ENCODE measurements at regions of chr19 and their contacts with region 1.

Region 1: DNA sequence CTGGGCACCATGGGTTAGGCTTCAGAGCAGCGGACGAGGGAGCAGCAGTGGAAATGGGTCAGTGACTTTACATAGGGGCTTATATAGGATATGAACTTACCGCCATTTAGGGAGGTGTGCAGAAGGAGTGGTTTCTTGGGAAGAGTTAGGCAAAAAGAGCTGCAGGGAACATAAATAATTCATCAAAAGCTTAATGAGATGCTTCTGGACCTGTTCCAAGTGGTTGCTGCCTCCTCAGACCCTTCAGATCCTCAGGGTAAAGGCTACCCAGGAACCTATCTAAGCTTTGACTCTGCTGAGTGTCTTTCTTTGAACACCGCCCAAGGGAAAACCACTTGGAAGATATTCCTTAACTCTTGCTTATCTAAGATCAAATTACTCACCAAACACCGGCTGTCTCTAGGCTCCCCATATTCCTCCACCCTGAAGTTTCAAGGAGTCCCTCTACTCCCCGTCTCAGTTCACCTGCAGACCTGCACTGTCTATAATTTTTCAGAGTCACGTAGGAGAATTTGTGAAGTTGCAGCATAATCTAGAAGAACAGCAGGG is at the start of gene IGFL4:
- DNase-seq: peak in 1 of 2 experiments; percentile 41
- ATAC-seq: peak; percentile 45 to 53; a peak in 4 of 6 replicates
- H3K4me3 ChIP-seq: no peak within 1 kb of the TSS
- H3K27ac ChIP-seq: peak within 1 kb of the TSS in 1 of 2 experiments; percentile 48; a peak in 3 of 6 replicates
- H3K4me1 ChIP-seq: peaks cover 14% of the 10 kb centered on the region
- CTCF ChIP-seq: no peak
- EP300 ChIP-seq: peak in 1 of 2 experiments; percentile 35; a peak in 1 of 5 replicates
- POLR2A ChIP-seq: no peak
- RAD21 ChIP-seq: no peak
- polyA plus RNA-seq, gene IGFL4: 1.7 and 2.4 TPM in 2 replicates

Region 2: DNA sequence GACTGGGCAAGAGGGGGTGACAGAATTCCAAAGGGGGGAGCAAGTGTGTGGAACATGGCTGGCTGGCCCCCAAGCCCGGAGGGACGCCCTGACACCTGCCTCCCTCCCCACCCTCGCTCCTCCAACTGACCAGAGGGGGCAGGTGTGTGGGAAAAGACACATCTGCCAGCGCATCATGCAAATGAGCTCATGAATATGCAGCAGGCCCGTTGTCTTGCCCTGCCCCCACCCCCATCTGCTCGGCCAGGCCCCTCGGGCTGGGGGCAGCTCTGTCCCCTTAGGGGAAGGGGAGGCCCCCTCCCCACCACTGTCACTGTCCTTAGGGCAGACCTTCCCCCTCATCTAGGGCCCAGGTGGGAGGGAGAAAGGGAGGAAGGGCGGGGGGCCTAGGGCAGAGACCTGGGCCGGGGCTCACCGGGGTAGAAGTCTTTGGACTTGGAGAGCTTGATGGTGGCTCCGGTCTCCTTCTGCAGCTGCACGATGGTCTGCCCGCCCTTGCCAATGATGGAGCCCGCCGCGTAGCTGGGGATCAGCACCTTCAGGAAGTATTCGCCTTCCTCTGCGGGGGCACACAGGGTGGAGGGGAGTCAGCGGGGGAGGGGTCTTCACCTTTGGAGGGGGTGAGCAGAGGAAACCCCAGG is 80.3 kb before region 1 on chr19:
- CTCF ChIA-PET with region 1: no interaction called
- POLR2A ChIA-PET with region 1: no interaction called
- DNase-seq: no peak
- ATAC-seq: peak; percentile 65 to 72
- H3K4me3 ChIP-seq: no peak overlapping the region
- H3K27ac ChIP-seq: no peak overlapping the region; a peak in 1 of 6 replicates
- H3K4me1 ChIP-seq: peaks cover 9% of the 10 kb centered on the region
- CTCF ChIP-seq: no peak
- EP300 ChIP-seq: no peak
- POLR2A ChIP-seq: no peak
- RAD21 ChIP-seq: no peak

Region 3: GRCh38 chr19:46016426-46017094 is 24.5 kb before region 1 on chr19:
- CTCF ChIA-PET with region 1: interaction called, 10 read pairs
- POLR2A ChIA-PET with region 1: no interaction called
- DNase-seq: peak; percentile 84 to 87
- ATAC-seq: peak; percentile 69 to 85
- H3K4me3 ChIP-seq: peak overlapping the region; percentile 59
- H3K27ac ChIP-seq: peak overlapping the region; percentile 54 to 80; a peak in 5 of 6 replicates
- H3K4me1 ChIP-seq: peaks cover 20% of the 10 kb centered on the region
- CTCF ChIP-seq: peak; percentile 74
- EP300 ChIP-seq: no peak
- POLR2A ChIP-seq: no peak
- RAD21 ChIP-seq: peak; percentile 35 to 61; a peak in 4 of 5 replicates

Region 4: DNA sequence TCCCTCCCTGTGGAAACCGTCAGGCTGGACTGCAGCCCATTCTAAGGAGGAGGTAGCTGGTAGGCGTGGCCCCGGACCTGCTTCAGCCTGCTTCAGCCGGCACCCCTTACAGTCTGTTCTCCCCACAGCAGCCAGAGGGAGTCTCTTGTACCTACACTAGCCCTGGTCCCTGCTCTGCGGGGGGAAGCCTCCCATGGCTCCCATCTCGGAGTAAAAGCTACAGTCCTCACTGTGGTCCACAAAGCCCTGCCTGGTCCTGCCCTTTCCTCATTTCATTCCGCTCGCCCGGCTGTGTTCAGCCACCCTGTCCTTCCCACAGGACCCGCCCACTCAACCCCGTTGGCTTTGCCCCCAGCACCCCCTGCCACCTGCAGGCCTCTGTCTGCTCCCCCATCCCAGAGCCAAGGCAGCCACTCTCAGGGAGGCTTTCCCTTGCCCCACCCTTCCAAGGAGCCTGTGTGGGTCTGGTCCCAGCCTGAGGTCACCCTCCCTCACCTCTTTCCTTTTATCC is 19.4 kb before region 1 on chr19:
- CTCF ChIA-PET with region 1: interaction called, 713 read pairs
- POLR2A ChIA-PET with region 1: no interaction called
- DNase-seq: peak in 1 of 2 experiments; percentile 34
- ATAC-seq: peak; percentile 11 to 28; a peak in 3 of 6 replicates
- H3K4me3 ChIP-seq: no peak overlapping the region
- H3K27ac ChIP-seq: no peak overlapping the region
- H3K4me1 ChIP-seq: peaks cover 4% of the 10 kb centered on the region; the same call in 2 of the 3 replicates
- CTCF ChIP-seq: no peak
- EP300 ChIP-seq: no peak
- POLR2A ChIP-seq: no peak
- RAD21 ChIP-seq: no peak

Region 5: GRCh38 chr19:46056536-46056935 is 15.5 kb after region 1 on chr19:
- CTCF ChIA-PET with region 1: interaction called, 713 read pairs
- POLR2A ChIA-PET with region 1: no interaction called
- DNase-seq: peak in 1 of 2 experiments; percentile 27
- ATAC-seq: peak in 1 of 2 experiments; percentile 30; a peak in 2 of 6 replicates
- H3K4me3 ChIP-seq: no peak overlapping the region
- H3K27ac ChIP-seq: peak overlapping the region in 1 of 2 experiments; percentile 51; a peak in 2 of 6 replicates
- H3K4me1 ChIP-seq: peaks cover 8% of the 10 kb centered on the region; the same call in 2 of the 3 replicates
- CTCF ChIP-seq: no peak
- EP300 ChIP-seq: no peak
- POLR2A ChIP-seq: no peak
- RAD21 ChIP-seq: no peak